ENCODE measurements at regions of chr4 and their contacts with region 1.

Region 1: GRCh38 chr4:20684852-20685763 is 15.2 kb upstream of the PACRGL start:
- DNase-seq: no peak
- H3K4me3 ChIP-seq: peak overlapping the region in 4 of 59 donors; percentile 5 to 29 (median 18)
- H3K27ac ChIP-seq: peak overlapping the region in 1 of 59 donors; percentile 35
- H3K27me3 ChIP-seq: no peaks in the 10 kb centered on the region
- CTCF ChIP-seq: peak; percentile 58 to 92 (median 79)

Region 2: DNA sequence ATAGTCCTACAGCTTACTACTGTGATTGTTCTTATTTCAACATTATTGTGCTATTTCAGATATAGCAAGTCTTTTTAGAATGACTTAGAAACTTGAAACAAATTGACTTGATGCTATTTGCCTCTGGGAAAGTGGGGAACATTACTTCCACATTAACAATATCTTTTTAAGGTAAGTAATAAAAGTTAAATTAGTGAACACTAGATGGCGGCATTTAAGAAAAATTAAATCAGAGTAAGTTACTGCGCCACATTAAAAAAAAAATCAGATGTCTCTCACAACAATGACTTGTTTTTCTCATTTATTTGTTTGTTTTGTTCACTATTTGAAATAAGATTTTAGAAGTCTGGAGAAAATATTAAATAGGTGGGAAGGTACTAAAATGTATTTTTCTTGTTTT is 1460.3 kb before region 1 on chr4:
- intact Hi-C with region 1: loop called in 1 of 2 experiments (anchors 10 kb)
- DNase-seq: no peak
- H3K4me3 ChIP-seq: no peak overlapping the region
- H3K27ac ChIP-seq: no peak overlapping the region
- H3K27me3 ChIP-seq: peaks cover 0 to 3% (median 0%) of the 10 kb centered on the region in 45 donors
- CTCF ChIP-seq: peak; percentile 34 to 79 (median 57)

Region 3: DNA sequence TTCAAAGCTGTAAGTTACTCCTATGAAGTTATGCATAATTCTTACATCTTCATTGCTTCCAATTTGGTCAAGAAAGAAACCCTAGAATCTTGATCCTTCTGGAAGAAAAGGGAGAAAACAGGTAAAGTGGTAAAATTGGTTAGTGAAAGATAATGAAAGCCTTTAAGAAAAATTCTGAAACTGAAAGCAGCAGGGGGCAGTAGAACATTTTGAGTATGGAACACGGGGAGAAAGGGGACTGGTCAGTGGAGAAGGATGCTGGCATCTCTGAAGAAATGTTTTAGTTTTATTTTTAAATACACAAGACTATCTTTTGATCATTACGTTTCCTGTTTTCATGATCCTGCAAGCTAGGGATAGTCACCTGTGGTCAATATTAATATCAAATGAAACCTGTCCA is 379.1 kb before region 1 on chr4:
- intact Hi-C with region 1: loop called (anchors 5 kb)
- DNase-seq: no peak
- H3K4me3 ChIP-seq: peak overlapping the region in 2 of 59 donors; percentile 9 to 15
- H3K27ac ChIP-seq: peak overlapping the region in 22 of 59 donors; percentile 0 to 70 (median 26)
- H3K27me3 ChIP-seq: no peaks in the 10 kb centered on the region
- CTCF ChIP-seq: peak; percentile 25 to 91 (median 66)

Region 4: DNA sequence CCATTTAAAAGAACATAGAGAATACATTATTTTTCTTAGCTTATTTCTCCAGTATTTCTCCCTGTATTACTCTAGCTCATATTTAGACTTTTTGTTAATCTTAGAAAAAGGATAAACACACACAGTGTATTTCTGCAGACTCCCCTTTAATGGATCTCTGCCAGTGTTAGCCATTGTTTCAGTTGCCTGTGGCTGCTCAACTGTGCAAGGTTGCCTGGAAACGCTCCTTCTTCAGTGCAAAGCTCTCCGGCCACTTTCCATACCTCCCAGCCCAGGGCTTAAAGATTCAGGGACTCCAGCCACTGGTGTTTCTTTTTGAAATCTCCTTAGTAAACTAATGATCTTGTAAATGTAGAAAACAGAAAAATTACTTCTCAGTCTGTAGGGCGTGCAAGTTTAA is 328.5 kb before region 1 on chr4:
- intact Hi-C with region 1: no loop called
- DNase-seq: peak in 1 of 10 donors; percentile 21
- H3K4me3 ChIP-seq: peak overlapping the region in 41 of 59 donors; percentile 0 to 58 (median 27)
- H3K27ac ChIP-seq: peak overlapping the region in 46 of 59 donors; percentile 2 to 78 (median 50)
- H3K27me3 ChIP-seq: no peaks in the 10 kb centered on the region
- CTCF ChIP-seq: peak in 1 of 56 donors; percentile 27

Region 5: GRCh38 chr4:20422398-20422797 is 262.7 kb before region 1 on chr4:
- intact Hi-C with region 1: loop called (anchors 5 kb)
- DNase-seq: peak in 1 of 10 donors; percentile 28
- H3K4me3 ChIP-seq: no peak overlapping the region
- H3K27ac ChIP-seq: no peak overlapping the region
- H3K27me3 ChIP-seq: no peaks in the 10 kb centered on the region
- CTCF ChIP-seq: peak; percentile 10 to 68 (median 50)

Region 6: GRCh38 chr4:20544645-20545044 is 140.5 kb before region 1 on chr4:
- intact Hi-C with region 1: loop called in 1 of 2 experiments (anchors 10 kb)
- DNase-seq: no peak
- H3K4me3 ChIP-seq: no peak overlapping the region
- H3K27ac ChIP-seq: no peak overlapping the region
- H3K27me3 ChIP-seq: no peaks in the 10 kb centered on the region
- CTCF ChIP-seq: peak; percentile 35 to 87 (median 71)

Measured in dorsolateral prefrontal cortex (tissue), 120 donors.